ENCODE measurements at regions of chr12 and their contacts with region 1.

Region 1: GRCh38 chr12:8949342-8950220 is at the start of gene M6PR:
- DNase-seq: peak; percentile 83
- ATAC-seq: peak; percentile 86
- H3K4me3 ChIP-seq: peak within 1 kb of the TSS; percentile 85
- H3K27ac ChIP-seq: peak within 1 kb of the TSS; percentile 78
- H3K4me1 ChIP-seq: peaks cover 7% of the 10 kb centered on the region
- H3K27me3 ChIP-seq: no peaks in the 10 kb centered on the region
- CTCF ChIP-seq: peak; percentile 42; the same call in 1 of the 2 replicates
- total RNA-seq, gene M6PR: 112 and 137 TPM in 2 replicates

Region 2: GRCh38 chr12:8890313-8891085 is 59.1 kb before region 1 on chr12:
- CTCF ChIA-PET with region 1: no interaction called
- POLR2A ChIA-PET with region 1: no interaction called
- intact Hi-C with region 1: no loop called
- DNase-seq: peak; percentile 59
- ATAC-seq: peak; percentile 60
- H3K4me3 ChIP-seq: peak overlapping the region; percentile 70
- H3K27ac ChIP-seq: no peak overlapping the region
- H3K4me1 ChIP-seq: no peaks in the 10 kb centered on the region
- H3K27me3 ChIP-seq: 0 out of 2 replicates have a peak, but pooled peaks cover 5% of the 10 kb centered on the region
- CTCF ChIP-seq: peak; percentile 82

Region 3: DNA sequence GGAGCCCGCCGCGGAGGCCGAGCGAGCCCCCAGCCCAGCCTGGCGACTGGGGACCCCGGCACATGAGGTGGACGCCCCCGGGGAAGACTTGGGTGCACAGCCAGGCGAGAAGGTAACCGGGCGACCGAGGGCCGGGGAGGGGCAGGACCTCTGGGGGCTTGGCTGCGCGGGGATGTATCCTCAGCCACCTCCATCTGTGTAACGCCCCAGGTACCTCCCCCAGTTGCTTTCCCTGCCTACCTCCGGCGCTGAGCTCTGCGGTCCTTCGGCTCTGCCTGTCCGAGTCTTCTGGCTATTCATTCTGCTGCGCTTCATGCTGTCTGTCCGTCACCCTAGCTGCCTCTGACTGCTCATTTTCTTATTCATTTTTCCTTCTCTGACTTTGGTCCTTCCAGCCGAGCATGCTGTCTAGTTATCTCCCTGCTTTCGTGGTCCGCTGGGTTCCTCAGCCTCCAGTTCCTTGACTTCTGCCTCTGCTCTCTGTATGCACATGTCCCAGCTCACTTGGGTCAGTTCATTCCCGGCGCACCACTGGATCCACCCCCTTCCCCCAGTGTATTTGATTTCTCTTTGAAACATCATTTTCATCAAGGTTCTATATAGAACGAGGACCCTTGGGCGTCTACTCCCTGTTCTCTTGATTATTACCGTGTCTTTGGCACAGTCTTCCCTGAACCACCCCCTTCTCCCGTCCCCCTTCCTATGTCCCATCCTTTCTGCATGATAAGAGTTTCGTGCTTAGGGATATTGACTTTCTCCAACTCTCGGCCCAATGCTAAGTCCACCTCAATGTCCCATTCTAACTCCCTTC is 34.7 kb before region 1 on chr12:
- CTCF ChIA-PET with region 1: no interaction called
- POLR2A ChIA-PET with region 1: no interaction called
- intact Hi-C with region 1: loop called (anchors 2 kb)
- DNase-seq: peak; percentile 37
- ATAC-seq: peak; percentile 87
- H3K4me3 ChIP-seq: peak overlapping the region; percentile 86
- H3K27ac ChIP-seq: no peak overlapping the region
- H3K4me1 ChIP-seq: peaks cover 11% of the 10 kb centered on the region
- H3K27me3 ChIP-seq: no peaks in the 10 kb centered on the region
- CTCF ChIP-seq: no peak

Region 4: DNA sequence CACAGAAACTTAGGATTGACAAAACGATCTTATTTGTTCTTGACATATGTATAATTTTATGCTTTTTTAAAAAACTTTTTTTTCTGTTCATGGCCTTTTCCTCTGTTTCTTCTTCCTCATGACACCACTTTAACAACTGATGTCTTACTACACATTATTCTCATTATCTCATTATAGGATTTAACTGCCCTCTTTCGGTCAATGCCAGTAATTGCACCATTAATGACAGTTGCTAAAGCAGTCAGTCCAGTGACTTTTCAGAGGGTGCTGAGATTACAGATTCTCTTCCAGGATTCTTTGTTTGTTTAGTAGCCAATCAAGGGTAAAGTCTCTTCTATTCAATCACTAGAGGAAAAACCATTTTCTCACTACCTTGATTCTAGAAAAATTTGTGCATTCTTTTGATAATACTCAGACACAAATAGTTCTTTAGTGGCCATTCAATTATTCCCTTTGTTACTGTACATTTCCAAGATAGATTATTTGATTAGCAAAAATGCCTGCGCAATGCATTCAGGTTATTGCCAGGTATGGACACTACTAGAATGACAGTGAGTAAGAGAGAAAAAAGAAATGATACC is 89.9 kb after region 1 on chr12:
- CTCF ChIA-PET with region 1: interaction called, 4 read pairs
- POLR2A ChIA-PET with region 1: no interaction called
- intact Hi-C with region 1: loop called (anchors 1 kb)
- DNase-seq: peak; percentile 64
- ATAC-seq: peak; percentile 51; the same call in 1 of the 2 replicates
- H3K4me3 ChIP-seq: no peak overlapping the region
- H3K27ac ChIP-seq: no peak overlapping the region
- H3K4me1 ChIP-seq: no peaks in the 10 kb centered on the region
- H3K27me3 ChIP-seq: no peaks in the 10 kb centered on the region; the same call in 1 of the 2 replicates
- CTCF ChIP-seq: peak; percentile 73

Region 5: DNA sequence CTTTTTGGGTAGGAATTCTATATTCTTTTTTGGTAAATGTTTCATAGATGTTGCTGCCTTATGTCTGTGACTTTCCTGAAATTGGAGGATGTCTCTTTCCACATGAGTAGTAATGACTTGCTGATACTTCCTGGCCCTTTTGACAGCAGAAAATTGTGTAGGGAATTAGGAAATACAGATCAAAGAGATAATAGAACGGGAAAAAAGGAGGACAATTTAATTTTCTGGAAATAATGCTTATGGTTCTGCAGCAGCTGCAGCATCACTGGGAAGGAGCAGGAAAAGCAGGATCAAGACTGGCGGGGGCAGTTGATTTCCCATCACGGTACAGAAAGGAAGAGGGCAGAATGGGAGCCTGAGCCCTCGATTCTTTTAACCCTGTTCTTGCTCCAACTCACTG is 327.4 kb after region 1 on chr12:
- CTCF ChIA-PET with region 1: no interaction called
- POLR2A ChIA-PET with region 1: no interaction called
- intact Hi-C with region 1: no loop called
- DNase-seq: no peak
- ATAC-seq: no peak
- H3K4me3 ChIP-seq: no peak overlapping the region
- H3K27ac ChIP-seq: no peak overlapping the region
- H3K4me1 ChIP-seq: peaks cover 11% of the 10 kb centered on the region
- H3K27me3 ChIP-seq: peaks cover 29% of the 10 kb centered on the region
- CTCF ChIP-seq: no peak

Measured in PC-3 (cell line).